ENCODE measurements at regions of chr3 and their contacts with region 1.

Region 1: GRCh38 chr3:42780892-42781700 is 8.0 kb upstream of the CCDC13 start:
- DNase-seq: no peak
- H3K4me3 Mint-ChIP-seq: no peak overlapping the region
- H3K27ac Mint-ChIP-seq: no peak overlapping the region
- H3K4me1 Mint-ChIP-seq: no peaks in the 10 kb centered on the region
- H3K27me3 Mint-ChIP-seq: no peaks in the 10 kb centered on the region

Region 2: DNA sequence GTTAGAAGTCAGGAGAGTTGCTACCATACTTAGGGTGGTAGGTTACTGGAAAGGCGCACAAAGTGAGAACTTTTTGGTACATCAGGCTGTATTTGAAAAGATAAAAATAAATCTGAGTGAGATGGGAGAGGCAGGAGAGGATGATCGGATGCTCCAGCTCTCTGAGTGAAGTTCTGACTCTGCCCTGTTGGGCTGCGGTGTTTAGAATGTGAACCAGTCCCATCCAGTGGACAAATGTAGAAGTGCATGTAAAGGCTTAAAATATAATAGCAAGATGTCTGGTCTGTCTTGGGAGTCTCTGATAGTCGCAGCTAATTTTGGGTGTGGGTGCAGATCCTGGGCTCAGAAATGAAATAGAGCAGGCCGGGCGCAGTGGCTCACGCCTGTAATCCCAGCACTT is 58.5 kb after region 1 on chr3:
- CTCF ChIA-PET with region 1: interaction called, 17 read pairs
- POLR2A ChIA-PET with region 1: no interaction called
- intact Hi-C with region 1: loop called (anchors 2 kb)
- DNase-seq: peak; percentile 25
- H3K4me3 Mint-ChIP-seq: no peak overlapping the region
- H3K27ac Mint-ChIP-seq: no peak overlapping the region
- H3K4me1 Mint-ChIP-seq: no peaks in the 10 kb centered on the region
- H3K27me3 Mint-ChIP-seq: peaks cover 3% of the 10 kb centered on the region

Region 3: GRCh38 chr3:42880601-42881451 is 99.7 kb after region 1 on chr3:
- CTCF ChIA-PET with region 1: interaction called, 16 read pairs
- POLR2A ChIA-PET with region 1: no interaction called
- intact Hi-C with region 1: loop called (anchors 1 kb)
- DNase-seq: peak; percentile 93
- H3K4me3 Mint-ChIP-seq: peak overlapping the region; percentile 76
- H3K27ac Mint-ChIP-seq: no peak overlapping the region
- H3K4me1 Mint-ChIP-seq: peaks cover 10% of the 10 kb centered on the region
- H3K27me3 Mint-ChIP-seq: peaks cover 1% of the 10 kb centered on the region

Measured in activated CD4-positive, alpha-beta memory T cell treated with anti-CD3 and anti-CD28 coated beads for 36 hours (primary cell).